CD8-positive, alpha-beta T cell (primary cell): ENCODE measurements at regions of chr6 and their contacts with region 1.

Region 1: GRCh38 chr6:138972226-138972665 is 15.8 kb downstream of the REPS1 start:
- DNase-seq: no peak
- ATAC-seq: no peak
- H3K4me3 ChIP-seq: no peak overlapping the region
- H3K4me3 Mint-ChIP-seq: no peak overlapping the region
- H3K27ac ChIP-seq: no peak overlapping the region
- H3K27ac Mint-ChIP-seq: peak overlapping the region; percentile 34
- H3K4me1 ChIP-seq: peaks cover 27% of the 10 kb centered on the region
- H3K4me1 Mint-ChIP-seq: peaks cover 85% of the 10 kb centered on the region
- H3K27me3 ChIP-seq: no peaks in the 10 kb centered on the region
- H3K27me3 Mint-ChIP-seq: no peaks in the 10 kb centered on the region
- CTCF ChIP-seq: no peak

Region 2: GRCh38 chr6:138945354-138945753 is 26.9 kb before region 1 on chr6:
- CTCF ChIA-PET with region 1: interaction called, 3 read pairs
- POLR2A ChIA-PET with region 1: no interaction called
- intact Hi-C with region 1: loop called in 1 of 2 experiments (anchors 2 kb)
- DNase-seq: peak in 3 of 9 experiments; percentile 12 to 31 (median 27)
- ATAC-seq: no peak
- H3K4me3 ChIP-seq: no peak overlapping the region
- H3K4me3 Mint-ChIP-seq: no peak overlapping the region
- H3K27ac ChIP-seq: no peak overlapping the region
- H3K27ac Mint-ChIP-seq: peak overlapping the region; percentile 37
- H3K4me1 ChIP-seq: peaks cover 14% of the 10 kb centered on the region
- H3K4me1 Mint-ChIP-seq: peaks cover 44% of the 10 kb centered on the region
- H3K27me3 ChIP-seq: no peaks in the 10 kb centered on the region
- H3K27me3 Mint-ChIP-seq: no peaks in the 10 kb centered on the region
- CTCF ChIP-seq: no peak

Region 3: DNA sequence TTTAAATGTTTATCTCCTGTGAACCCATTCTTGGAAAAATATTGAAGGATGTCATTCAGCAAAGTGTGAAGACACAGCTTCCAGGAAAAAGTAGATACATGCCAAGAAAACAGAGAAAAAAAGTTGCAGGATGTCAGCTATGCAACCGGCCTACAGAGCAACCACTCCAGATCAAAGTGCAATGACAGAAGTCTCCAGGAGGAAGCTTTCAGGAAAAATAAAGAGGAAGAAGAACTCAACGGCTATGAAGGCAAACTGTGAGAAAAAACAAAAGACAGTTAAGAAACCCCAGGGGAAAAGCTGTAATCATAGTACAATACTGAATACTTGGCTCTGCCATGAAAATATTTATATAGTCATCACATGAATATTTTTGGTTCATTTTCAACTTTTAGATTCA is 14.8 kb before region 1 on chr6:
- CTCF ChIA-PET with region 1: interaction called, 3 read pairs
- POLR2A ChIA-PET with region 1: interaction called, 3 read pairs
- intact Hi-C with region 1: loop called in 1 of 2 experiments (anchors 2 kb)
- DNase-seq: no peak
- ATAC-seq: no peak
- H3K4me3 ChIP-seq: no peak overlapping the region
- H3K4me3 Mint-ChIP-seq: no peak overlapping the region
- H3K27ac ChIP-seq: no peak overlapping the region
- H3K27ac Mint-ChIP-seq: peak overlapping the region; percentile 25
- H3K4me1 ChIP-seq: peaks cover 26% of the 10 kb centered on the region
- H3K4me1 Mint-ChIP-seq: peaks cover 74% of the 10 kb centered on the region
- H3K27me3 ChIP-seq: no peaks in the 10 kb centered on the region
- H3K27me3 Mint-ChIP-seq: no peaks in the 10 kb centered on the region
- CTCF ChIP-seq: no peak

Region 4: DNA sequence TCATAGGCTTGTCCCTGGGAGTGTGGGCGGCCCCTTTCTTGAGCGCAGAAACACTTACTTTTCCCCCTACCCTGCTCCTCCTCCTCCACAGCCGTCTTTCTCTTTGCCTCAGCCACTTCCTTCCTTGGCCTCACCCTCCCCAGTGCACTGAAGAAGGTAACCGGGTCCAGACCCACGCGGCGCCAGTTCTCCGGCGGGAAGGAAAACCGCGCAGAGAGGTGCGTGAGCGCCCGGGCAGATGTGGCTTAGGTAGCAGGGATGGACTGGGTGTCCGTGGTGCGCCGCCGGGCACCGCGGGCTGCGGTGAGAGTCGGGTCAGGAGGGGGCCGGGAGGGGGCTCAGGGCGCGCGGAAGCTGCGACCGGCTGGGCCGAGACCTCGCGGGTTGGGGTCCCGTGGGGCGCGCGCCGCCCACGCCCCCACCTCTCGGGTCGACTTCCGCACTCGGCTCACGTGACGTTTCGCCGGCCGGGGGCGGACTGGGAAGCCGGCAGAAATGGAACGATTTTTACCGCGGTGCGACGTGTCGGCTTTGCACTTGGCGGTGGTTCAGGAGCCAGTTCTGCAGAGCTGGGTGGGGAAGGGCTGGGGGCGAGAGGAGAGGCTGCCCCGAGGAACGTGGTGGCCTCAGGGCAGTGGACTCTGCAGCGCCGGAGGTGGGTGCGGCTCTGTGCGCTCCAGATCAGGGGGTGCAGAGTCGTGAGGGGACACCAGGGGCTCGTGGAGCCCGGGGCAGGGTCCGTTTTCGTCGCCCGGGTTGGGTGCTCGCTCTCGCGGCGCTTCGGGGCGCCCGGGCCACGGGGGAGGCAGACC is 56.6 kb after region 1 on chr6 and contains the start of gene ABRACL:
- CTCF ChIA-PET with region 1: no interaction called
- POLR2A ChIA-PET with region 1: no interaction called
- intact Hi-C with region 1: no loop called
- DNase-seq: peak; percentile 38 to 89 (median 74)
- ATAC-seq: peak; percentile 88
- H3K4me3 ChIP-seq: peak within 1 kb of the TSS; percentile 93 to 99
- H3K4me3 Mint-ChIP-seq: no peak within 1 kb of the TSS
- H3K27ac ChIP-seq: peak within 1 kb of the TSS; percentile 86 to 90
- H3K27ac Mint-ChIP-seq: peak within 1 kb of the TSS; percentile 96
- H3K4me1 ChIP-seq: peaks cover 24% of the 10 kb centered on the region
- H3K4me1 Mint-ChIP-seq: peaks cover 31% of the 10 kb centered on the region
- H3K27me3 ChIP-seq: no peaks in the 10 kb centered on the region
- H3K27me3 Mint-ChIP-seq: no peaks in the 10 kb centered on the region
- CTCF ChIP-seq: no peak
- total RNA-seq, gene ABRACL: 30.4 to 30.5 TPM